Colonic mucosa (tissue), 4 donors: ENCODE measurements at regions of chr7 and their contacts with region 1.

Region 1: DNA sequence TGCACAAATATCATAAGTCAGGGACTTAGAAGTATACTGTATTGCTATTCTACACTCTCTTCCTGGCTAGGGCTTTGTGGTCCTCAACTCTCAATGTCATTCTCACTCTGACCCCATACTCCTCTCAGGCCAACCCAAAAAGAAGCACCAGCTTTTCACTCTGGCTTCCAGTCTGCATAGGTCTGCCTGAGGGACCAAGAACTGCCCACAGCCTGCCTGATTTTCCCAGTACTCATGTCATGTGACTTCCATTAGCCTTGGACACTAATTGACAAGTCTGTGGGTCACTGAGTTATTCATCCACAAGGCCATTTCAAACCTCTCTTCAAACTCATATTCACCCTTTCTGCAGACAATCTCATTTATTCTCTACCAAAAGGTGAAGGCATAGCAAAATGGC is 19.8 kb downstream of the PMPCB start:
- DNase-seq: no peak
- H3K4me3 ChIP-seq: no peak overlapping the region
- H3K27ac ChIP-seq: no peak overlapping the region
- H3K4me1 ChIP-seq: no peaks in the 10 kb centered on the region
- H3K27me3 ChIP-seq: no peaks in the 10 kb centered on the region
- CTCF ChIP-seq: no peak

Region 2: GRCh38 chr7:103369430-103369829 is 52.4 kb after region 1 on chr7:
- intact Hi-C with region 1: loop called (anchors 10 kb)
- DNase-seq: no peak
- H3K4me3 ChIP-seq: no peak overlapping the region
- H3K27ac ChIP-seq: no peak overlapping the region
- H3K4me1 ChIP-seq: no peaks in the 10 kb centered on the region
- H3K27me3 ChIP-seq: no peaks in the 10 kb centered on the region
- CTCF ChIP-seq: no peak